ENCODE measurements at regions of chr11 and their contacts with region 1.

Region 1: GRCh38 chr11:13261591-13262061 is 16.0 kb upstream of the BMAL1 start:
- DNase-seq: peak in 1 of 2 experiments; percentile 81
- H3K4me3 ChIP-seq: no peak overlapping the region
- H3K27ac ChIP-seq: peak overlapping the region; percentile 75
- H3K4me1 ChIP-seq: peaks cover 37% of the 10 kb centered on the region
- H3K27me3 ChIP-seq: no peaks in the 10 kb centered on the region
- CTCF ChIP-seq: no peak

Region 2: DNA sequence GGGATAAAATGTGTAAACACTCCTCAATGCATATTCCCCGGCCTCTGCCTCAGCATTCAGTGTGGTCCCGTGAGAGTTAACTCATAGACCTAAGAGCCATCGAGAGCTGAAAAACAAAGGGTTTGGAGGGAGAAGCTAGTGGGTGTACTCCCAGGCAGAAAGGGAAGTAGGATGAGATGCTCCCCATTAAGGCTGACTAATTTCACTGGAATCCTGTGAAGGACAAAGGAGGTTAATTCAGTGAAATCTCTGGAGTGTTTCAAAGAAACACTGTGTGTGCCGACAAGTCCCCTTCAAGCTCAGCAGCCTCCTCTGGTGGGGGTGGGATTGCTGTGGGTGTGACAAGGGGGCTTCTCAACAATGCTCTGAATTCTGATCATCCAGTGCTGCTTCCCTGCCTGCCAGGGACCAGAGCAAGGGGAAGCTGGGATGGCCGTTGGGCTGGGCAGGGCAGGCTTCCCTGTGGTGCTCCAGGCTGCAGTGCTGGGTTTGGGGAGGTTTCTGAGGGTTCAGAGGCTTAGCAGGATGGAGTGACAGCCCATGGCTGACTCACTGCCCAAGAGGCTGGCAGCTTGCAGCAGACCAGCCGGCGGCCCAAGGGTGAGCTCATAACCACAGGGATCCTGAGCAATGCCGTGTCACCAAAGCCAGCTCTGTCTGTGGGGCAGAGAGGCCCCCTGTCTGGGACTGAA is 45.5 kb before region 1 on chr11:
- CTCF ChIA-PET with region 1: interaction called, 3 read pairs
- POLR2A ChIA-PET with region 1: no interaction called
- intact Hi-C with region 1: loop called (anchors 1 kb)
- DNase-seq: peak; percentile 80 to 89
- H3K4me3 ChIP-seq: peak overlapping the region; percentile 16; the same call in 1 of the 2 replicates
- H3K27ac ChIP-seq: peak overlapping the region; percentile 91
- H3K4me1 ChIP-seq: peaks cover 50% of the 10 kb centered on the region
- H3K27me3 ChIP-seq: no peaks in the 10 kb centered on the region
- CTCF ChIP-seq: no peak